ENCODE measurements at regions of chr3 and their contacts with region 1.

Region 1: DNA sequence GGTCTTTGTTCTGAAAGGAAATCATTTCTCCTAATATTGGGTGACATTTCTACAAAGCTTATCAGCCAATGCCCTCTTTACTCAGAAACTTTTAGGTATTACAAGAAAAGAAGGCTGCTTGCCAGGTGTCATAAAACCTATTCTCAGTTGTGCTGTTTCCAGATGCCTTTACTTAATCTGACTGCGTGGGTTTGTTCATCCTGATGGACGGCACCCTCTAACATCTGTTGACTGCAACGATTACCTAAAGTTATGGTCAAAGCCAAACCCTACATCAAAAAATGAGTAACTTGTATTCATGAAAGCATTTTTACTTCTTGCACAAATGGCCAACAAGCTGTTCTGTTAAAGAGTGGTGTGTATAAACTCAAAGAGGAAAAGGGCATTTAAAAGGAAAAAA is 207.7 kb upstream of the PDZRN3 start:
- DNase-seq: no peak

Region 2: DNA sequence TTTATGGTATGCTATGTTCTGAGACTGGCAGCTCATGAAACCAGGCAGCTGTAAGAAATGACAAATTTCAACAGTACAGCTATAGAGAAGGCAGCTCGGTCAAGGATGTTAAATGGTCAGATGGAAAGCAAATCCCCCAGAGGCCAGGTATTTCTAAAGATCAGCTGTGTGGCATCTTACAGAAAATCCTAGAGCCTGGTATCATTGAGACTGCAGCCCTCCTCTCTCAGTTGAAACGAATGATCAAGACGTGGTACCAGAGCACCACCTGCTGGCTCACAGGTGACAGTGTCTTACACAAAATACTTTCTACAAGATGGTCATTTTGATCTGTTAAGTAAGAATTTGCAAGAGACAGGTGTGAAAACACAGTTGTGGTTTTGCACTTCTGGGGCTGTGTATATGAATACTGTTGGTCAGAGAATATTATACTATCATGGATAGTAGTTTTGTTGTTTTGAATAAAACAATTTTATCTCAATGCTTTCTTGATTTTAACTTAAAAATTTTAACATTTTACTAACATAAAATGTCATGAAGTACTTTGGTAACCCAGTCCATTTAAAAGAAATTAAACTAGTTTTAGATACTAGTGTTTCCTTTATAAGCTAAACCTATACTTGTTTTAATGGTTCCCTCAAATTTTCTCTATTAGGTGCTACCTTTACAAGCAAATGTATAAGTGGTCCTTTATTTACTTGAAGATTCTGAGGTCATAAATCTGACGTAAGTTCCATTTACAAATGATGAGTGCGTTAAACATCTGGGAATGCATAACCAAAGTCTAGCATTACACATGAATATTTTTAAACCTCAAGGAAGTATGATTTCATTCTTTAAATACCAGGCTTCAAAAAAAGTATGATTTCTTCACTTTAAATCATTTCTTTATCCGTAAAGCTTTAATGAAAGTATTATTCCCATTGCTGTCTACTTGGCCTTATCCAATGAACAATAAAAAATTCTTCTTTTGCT is 329.5 kb before region 1 on chr3:
- intact Hi-C with region 1: loop called in 1 of 2 experiments (anchors 10 kb)
- DNase-seq: peak; percentile 88

Region 3: DNA sequence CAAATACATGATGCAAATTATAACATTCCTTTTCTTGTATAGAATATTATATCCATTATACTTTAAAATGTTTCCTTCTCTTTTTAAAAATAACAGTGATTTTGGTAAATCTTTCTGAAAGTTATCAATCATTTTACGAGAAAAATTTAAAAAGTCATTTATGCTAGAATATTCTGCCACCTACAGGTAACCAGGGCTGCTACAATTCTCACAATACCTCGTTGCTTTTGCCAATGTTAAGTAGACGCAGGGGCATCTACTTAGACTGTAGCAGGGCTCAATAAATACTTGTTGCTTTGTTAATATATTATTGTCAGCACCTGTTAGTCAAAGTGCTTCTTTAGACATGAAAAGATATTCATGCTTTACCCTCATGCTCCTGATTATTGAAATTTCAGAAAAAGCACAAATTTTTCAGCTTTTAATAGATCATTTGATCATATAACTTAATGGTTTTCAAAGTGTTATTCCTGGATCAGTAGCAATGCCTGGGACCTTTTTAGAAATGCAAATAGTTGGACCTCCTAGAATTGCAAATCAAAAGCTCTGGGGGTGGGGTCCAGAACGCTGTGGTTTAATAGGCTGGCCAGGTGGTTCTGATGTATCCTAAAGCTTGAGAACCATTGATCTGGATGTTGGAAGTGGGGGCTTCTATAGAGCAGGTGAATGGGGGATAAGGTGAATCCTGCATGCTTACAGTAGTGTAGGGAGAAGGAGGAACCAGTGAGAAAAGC is 15.9 kb after region 1 on chr3:
- intact Hi-C with region 1: no loop called
- DNase-seq: no peak

Measured in posterior vena cava (tissue), 2 donors.